ENCODE measurements at regions of chr16 and their contacts with region 1.

Region 1: DNA sequence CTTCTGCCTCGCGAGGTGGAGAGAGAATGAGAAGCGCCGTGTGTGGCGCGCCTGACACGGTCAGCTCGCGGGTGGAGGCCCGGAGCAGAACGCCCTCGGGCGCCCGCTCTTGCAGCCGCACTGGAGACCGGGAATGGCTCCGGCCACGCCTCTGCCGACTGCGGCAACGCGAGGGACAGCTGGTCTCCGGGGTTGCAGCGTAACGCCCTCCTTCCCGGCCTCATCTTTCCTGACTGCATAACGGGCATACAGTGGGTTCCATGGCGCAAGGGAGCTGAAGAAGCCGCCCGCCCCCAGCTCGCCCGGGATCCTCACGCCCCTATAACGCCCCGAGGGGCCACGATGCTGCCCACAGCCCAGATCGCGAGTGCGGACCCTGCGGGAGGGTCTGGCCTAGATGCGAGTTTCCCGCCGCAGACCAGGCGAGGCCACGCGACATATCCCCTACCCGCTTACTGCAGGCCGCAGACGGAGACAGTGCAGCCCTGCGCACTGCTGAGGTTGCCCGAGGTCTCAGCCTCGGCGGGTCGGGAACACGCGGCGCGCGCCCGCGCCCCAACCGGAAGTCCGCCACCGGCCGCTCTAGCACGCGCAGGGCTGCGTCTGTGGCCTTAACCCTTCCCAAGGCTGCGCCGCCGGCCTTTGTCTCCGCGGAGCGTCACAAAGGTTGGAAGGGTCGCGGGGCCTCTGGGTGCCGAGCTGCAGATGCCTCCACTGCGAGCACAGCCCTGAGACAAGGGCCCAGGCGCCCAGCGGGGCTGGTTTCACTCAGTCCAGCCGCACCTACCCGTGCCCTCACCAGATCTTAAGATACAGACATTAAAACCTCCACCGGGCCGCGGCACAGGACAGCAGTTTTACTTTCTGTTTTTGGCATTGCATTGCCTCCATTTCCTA is 18.8 kb downstream of the BCL7C start:
- DNase-seq: peak; percentile 39 to 94
- H3K4me3 ChIP-seq: peak overlapping the region; percentile 69 to 84
- H3K27ac ChIP-seq: peak overlapping the region; percentile 76 to 79
- H3K4me1 ChIP-seq: peaks cover 3 to 17% of the 10 kb centered on the region in 2 donors
- H3K27me3 ChIP-seq: no peaks in the 10 kb centered on the region
- CTCF ChIP-seq: no peak

Region 2: DNA sequence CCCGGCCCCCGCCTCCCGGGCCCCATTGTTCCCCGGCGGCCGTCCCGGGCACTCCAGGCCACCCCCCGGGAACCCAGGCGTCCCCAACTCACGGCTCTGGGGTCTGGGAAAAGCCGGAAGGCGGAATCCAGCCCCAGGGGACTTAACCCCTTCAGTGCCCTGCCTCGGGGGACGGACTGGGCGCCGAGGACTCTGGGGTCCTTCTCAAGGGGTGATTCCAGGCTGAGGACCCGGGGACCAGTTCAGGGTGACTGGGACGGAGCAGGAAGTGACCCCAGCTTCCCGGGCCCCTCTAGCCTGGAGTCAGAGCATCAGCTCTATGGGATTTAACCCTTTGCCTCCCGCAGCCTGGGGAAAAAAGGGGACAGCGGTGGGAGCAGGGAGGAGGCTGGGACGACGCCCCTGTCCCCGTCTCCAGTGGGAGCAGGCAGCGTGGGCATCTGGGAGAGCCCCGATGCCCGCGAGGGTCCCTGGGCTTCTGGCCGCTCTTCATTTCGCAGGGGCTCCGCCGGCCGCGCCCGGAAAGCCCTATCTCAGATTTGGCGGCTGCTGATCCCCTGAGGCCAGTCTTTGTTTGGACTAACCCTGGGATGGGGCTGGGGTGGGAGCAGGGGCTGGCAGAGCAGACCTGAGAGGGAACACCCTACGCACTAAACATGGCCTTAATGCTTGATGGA is 88.0 kb before region 1 on chr16 and contains the start of gene ZNF629:
- intact Hi-C with region 1: loop called (anchors 1 kb)
- DNase-seq: peak in 1 of 2 donors; percentile 85
- H3K4me3 ChIP-seq: peak within 1 kb of the TSS; percentile 86
- H3K27ac ChIP-seq: peak within 1 kb of the TSS; percentile 87 to 89
- H3K4me1 ChIP-seq: peaks cover 4 to 7% of the 10 kb centered on the region in 2 donors
- H3K27me3 ChIP-seq: no peaks in the 10 kb centered on the region
- CTCF ChIP-seq: no peak
- total RNA-seq, gene ZNF629: 12.3 TPM

Region 3: DNA sequence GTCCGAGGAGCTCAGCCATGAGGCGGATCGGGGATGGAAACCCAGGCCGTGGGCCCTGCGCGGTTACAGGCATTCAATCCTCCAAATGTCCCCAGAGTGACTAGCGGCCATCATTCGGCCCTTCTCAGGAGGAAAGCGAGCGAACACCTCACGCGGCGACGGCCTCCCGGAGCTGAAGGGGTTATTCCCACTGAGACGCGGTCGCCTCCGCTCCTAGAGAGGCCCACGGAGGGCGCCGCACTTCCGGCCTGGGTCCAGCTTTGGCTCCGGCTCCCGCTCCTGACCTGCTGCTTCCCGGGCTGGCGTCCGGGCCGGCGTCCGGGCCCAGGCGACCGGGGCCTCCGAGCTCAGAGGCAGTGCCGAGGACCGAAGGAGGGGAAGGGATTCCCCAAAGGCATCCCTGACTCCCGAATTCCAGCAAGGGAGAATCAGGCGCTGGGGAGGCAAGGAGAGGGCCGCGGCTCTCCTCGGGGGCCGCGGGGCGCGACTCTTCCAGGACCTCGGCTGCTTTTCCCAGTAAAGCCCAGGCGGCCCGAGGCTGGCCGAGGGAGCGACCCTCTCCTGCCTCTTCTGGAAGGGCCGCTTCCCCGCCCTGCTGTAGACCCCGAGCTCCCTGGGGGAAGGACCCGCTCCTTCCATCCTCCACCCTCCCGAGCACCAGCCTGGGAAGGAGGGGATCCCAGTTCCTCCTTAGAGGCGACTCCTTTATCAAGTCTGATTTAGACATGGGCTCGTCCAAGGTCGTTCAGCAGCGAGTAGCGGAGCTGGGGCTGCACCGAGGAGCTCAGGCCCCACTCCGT is 69.5 kb before region 1 on chr16:
- intact Hi-C with region 1: loop called (anchors 2 kb)
- DNase-seq: peak; percentile 20 to 90
- H3K4me3 ChIP-seq: peak overlapping the region; percentile 81 to 82
- H3K27ac ChIP-seq: peak overlapping the region; percentile 92
- H3K4me1 ChIP-seq: peaks cover 0 to 12% of the 10 kb centered on the region in 2 donors
- H3K27me3 ChIP-seq: no peaks in the 10 kb centered on the region
- CTCF ChIP-seq: peak in 1 of 3 experiments; percentile 5

Region 4: GRCh38 chr16:30844671-30845449 is 30.2 kb before region 1 on chr16:
- intact Hi-C with region 1: loop called (anchors 1 kb)
- DNase-seq: peak in 1 of 2 donors; percentile 89
- H3K4me3 ChIP-seq: peak overlapping the region; percentile 17 to 59
- H3K27ac ChIP-seq: peak overlapping the region in 1 of 2 donors; percentile 48
- H3K4me1 ChIP-seq: peaks cover 3 to 6% of the 10 kb centered on the region in 2 donors
- H3K27me3 ChIP-seq: no peaks in the 10 kb centered on the region
- CTCF ChIP-seq: peak; percentile 69 to 91 (median 82)

Region 5: GRCh38 chr16:30902029-30902972 is 27.2 kb after region 1 on chr16:
- intact Hi-C with region 1: loop called (anchors 1 kb)
- DNase-seq: peak in 1 of 2 donors; percentile 80
- H3K4me3 ChIP-seq: peak overlapping the region; percentile 76 to 82
- H3K27ac ChIP-seq: peak overlapping the region; percentile 86 to 92
- H3K4me1 ChIP-seq: peaks cover 4 to 5% of the 10 kb centered on the region in 2 donors
- H3K27me3 ChIP-seq: no peaks in the 10 kb centered on the region
- CTCF ChIP-seq: peak in 1 of 3 experiments; percentile 75